ENCODE measurements at regions of chr4 and their contacts with region 1.

Region 1: GRCh38 chr4:112938461-112939058 is 110.9 kb upstream of the ANK2 start:
- DNase-seq: no peak
- H3K4me3 ChIP-seq: no peak overlapping the region
- H3K27ac ChIP-seq: no peak overlapping the region
- H3K4me1 ChIP-seq: peaks cover 0 to 8% (median 0%) of the 10 kb centered on the region in 4 donors
- H3K27me3 ChIP-seq: no peaks in the 10 kb centered on the region
- CTCF ChIP-seq: peak; percentile 60 to 83 (median 75)
- EP300 ChIP-seq: no peak
- POLR2A ChIP-seq: no peak

Region 2: GRCh38 chr4:112765317-112765975 is 173.1 kb before region 1 on chr4:
- intact Hi-C with region 1: loop called (anchors 2 kb)
- DNase-seq: no peak
- H3K4me3 ChIP-seq: no peak overlapping the region
- H3K27ac ChIP-seq: no peak overlapping the region
- H3K4me1 ChIP-seq: no peaks in the 10 kb centered on the region
- H3K27me3 ChIP-seq: no peaks in the 10 kb centered on the region
- CTCF ChIP-seq: peak in 3 of 4 experiments; percentile 10 to 25 (median 12)
- EP300 ChIP-seq: no peak
- POLR2A ChIP-seq: no peak

Region 3: DNA sequence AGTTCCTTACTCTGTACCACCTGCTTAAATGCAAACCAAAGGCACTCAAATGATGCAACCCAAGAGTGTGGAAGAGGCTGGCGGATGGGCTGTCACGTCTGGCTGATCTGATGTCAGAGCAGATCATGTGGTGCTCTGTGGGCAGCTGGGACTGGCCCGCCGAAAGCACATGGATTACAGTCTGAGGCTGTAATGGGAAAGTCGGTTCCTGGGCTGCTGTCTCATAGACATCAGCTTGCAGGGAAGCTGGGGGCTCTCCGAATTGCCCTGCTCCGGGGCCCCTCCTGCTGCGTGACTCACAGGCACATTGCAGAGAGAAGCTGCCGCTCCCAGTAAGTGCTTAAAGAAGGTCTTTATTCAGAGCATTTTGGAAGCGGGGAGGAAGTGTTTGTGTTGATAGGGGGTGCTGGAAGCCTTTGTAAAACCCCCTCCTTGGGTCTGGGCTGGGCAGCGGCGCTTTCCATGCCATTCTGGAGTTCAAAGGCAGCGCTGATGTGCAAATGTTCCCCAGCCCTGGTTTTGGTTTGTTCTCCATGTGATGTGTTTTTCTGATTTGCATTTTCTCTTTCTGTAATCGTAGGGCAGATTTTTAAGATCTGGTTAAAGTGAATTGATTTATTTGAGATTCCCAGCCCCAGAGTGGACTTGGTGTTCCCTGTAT is 120.5 kb before region 1 on chr4:
- intact Hi-C with region 1: loop called (anchors 2 kb)
- DNase-seq: peak; percentile 89
- H3K4me3 ChIP-seq: peak overlapping the region; percentile 45 to 66 (median 54)
- H3K27ac ChIP-seq: peak overlapping the region; percentile 63 to 82 (median 74)
- H3K4me1 ChIP-seq: peaks cover 0 to 15% (median 5%) of the 10 kb centered on the region in 4 donors
- H3K27me3 ChIP-seq: no peaks in the 10 kb centered on the region
- CTCF ChIP-seq: no peak
- EP300 ChIP-seq: no peak
- POLR2A ChIP-seq: peak in 1 of 2 donors; percentile 26

Region 4: DNA sequence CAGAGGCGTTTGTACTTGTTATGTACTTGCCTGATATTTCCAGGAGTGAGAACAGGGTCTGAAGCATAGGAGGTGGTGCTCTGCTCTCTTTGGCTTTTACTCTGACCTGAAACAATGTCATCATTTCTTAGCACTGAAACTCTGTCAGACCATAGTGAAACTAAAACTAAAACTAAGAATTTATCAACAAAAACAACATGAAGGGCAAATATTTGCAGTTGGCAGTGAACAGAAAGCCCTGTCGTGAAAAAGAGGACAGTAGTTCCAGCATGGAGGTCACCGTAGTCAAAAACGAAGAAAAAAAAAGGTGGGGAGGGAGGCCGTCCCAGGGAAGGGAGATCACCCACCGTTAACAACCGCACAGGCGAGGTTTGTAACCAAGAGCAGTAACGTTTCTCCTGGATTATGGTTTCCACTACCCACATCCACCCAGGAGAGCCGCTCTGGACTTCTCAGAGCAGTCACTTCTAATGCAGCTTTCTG is 208.4 kb after region 1 on chr4:
- intact Hi-C with region 1: no loop called
- DNase-seq: no peak
- H3K4me3 ChIP-seq: peak overlapping the region in 3 of 4 donors; percentile 20 to 37 (median 36)
- H3K27ac ChIP-seq: peak overlapping the region; percentile 35 to 46 (median 42)
- H3K4me1 ChIP-seq: peaks cover 0 to 28% (median 8%) of the 10 kb centered on the region in 4 donors
- H3K27me3 ChIP-seq: no peaks in the 10 kb centered on the region
- CTCF ChIP-seq: no peak
- EP300 ChIP-seq: no peak
- POLR2A ChIP-seq: no peak